Uterus (tissue), 4 donors: ENCODE measurements at regions of chr1 and their contacts with region 1.

Region 1: DNA sequence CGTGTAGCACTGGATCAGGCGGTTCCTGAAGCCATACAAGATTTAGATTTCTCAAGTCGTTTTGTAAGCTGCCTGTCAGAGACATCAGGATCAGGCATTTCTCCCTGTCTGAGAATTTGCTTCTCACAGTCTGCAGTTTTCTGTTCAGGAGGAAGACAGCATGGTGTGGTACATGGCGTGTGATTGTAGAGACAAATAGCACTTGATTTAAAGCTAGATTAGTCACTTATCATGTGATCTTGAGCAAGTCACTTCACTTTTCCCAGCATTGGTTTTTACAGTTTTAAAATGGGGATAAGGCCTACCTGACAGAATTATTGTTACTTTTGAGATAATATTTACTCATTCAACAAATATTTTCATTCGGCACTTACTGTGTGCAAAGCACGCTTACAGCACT is 63.3 kb downstream of the AK4 start:
- DNase-seq: no peak
- H3K4me3 ChIP-seq: no peak overlapping the region
- H3K27ac ChIP-seq: no peak overlapping the region
- H3K4me1 ChIP-seq: no peaks in the 10 kb centered on the region
- H3K27me3 ChIP-seq: no peaks in the 10 kb centered on the region
- CTCF ChIP-seq: no peak
- POLR2A ChIP-seq: no peak

Region 2: GRCh38 chr1:65148548-65149350 is 62.6 kb before region 1 on chr1:
- intact Hi-C with region 1: loop called (anchors 1 kb)
- DNase-seq: peak; percentile 47
- H3K4me3 ChIP-seq: peak overlapping the region; percentile 49 to 72
- H3K27ac ChIP-seq: peak overlapping the region; percentile 72 to 85
- H3K4me1 ChIP-seq: no peaks in the 10 kb centered on the region
- H3K27me3 ChIP-seq: no peaks in the 10 kb centered on the region
- CTCF ChIP-seq: no peak
- POLR2A ChIP-seq: peak in 1 of 2 donors; percentile 17

Region 3: GRCh38 chr1:65493802-65494201 is 282.5 kb after region 1 on chr1:
- intact Hi-C with region 1: no loop called
- DNase-seq: no peak
- H3K4me3 ChIP-seq: no peak overlapping the region
- H3K27ac ChIP-seq: no peak overlapping the region
- H3K4me1 ChIP-seq: no peaks in the 10 kb centered on the region
- H3K27me3 ChIP-seq: no peaks in the 10 kb centered on the region
- CTCF ChIP-seq: no peak
- POLR2A ChIP-seq: no peak